ENCODE measurements at regions of chr16 and their contacts with region 1.

Region 1: DNA sequence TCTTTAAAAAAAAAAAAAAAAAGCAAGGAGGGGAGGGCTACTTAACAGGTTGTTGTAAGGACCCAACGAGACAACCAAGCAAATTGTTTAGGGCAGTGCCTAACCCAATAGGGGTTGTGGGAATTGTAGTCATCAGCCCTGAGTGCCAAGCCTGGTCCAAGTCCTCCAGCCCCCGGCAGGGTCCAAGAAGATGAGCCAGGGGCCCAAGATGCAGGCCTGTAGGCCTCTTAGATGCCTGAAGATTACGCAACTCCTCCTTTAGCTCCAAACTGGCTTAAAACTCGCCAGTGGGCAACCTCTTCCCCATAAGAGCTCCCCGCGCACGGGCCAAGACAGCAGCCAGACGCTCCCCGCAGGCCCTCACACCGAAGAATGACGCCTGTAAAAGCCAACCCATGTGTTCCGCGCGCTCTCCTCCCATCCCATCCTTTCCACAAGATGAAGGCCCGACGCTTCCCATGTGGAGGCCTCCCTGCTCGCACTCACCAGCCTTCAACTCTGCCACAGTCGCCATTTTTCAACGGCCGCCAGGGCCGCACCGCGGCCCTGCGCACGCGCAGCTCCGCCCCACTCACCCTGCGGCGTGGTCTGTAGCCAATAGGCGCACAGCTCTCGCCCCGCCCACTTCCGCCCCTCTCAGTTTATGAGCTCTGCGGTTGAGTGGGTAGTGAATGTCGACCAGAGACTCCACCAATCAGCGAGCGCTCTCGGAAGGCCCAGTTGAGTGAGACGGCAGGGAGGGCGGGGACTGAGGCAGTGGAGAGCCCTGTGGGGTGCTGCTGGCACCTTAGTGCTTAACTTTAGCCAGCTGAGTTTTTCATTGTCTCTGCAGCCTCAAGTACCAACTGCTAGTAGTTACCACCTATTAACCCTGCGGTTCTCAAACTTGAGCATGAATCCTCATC is at the start of gene CEP20:
- DNase-seq: peak; percentile 99 to 100 (median 99)
- H3K4me3 ChIP-seq: peak within 1 kb of the TSS; percentile 58 to 95 (median 68)
- H3K4me3 Mint-ChIP-seq: peak within 1 kb of the TSS; percentile 100
- H3K27ac ChIP-seq: peak within 1 kb of the TSS; percentile 76 to 91
- H3K27ac Mint-ChIP-seq: peak within 1 kb of the TSS; percentile 98 to 100 (median 98)
- H3K4me1 ChIP-seq: peaks cover 14 to 21% of the 10 kb centered on the region in 2 donors
- H3K4me1 Mint-ChIP-seq: peaks cover 30% of the 10 kb centered on the region
- H3K27me3 ChIP-seq: no peaks in the 10 kb centered on the region
- H3K27me3 Mint-ChIP-seq: peaks cover 0 to 2% (median 0%) of the 10 kb centered on the region in 3 donors
- CTCF ChIP-seq: no peak
- polyA plus RNA-seq, gene CEP20: 11.6 to 27.3 (median 24.7) TPM

Region 2: DNA sequence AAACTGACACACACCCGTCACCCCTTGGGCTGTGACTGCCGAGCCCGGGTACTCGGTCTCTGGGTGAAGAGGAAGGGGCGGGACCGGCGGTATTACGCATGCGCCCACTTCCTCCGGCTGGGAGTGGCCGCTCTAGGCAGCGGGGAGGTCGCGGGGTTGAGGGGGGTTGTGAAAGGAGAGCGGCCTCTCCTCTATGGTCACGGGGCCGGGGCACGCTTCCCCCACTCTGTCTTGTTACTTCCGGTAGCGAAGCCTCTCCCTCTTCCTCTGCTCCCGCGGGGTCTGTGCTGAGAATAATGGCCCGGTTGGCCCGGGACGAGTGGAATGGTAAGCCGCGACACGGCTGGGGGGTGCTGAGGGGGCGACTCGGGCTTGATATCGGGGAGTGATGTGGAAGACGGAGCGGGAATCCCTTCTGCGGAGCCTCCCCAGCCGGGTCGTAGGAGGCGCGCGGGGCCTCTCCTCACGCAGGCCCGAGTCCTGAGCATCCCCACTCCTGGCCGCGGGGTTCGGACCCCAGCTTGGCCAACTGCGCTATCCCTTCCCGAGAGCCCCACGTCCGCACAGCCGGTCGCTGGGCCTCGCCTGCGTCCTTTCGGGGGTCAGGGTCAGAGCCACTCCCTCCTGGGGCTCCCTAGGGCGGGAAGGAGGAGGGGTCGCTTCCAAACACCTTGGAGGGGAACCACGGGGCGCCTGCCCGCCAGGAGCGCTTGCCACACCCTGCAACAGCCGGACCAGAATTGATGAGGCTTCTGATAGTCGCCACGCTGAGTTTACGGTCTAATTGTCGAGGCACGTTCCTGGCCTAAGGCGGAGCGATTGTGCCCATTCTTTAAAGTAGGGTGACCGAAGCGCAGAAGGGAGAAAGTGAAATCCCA is 1255.4 kb before region 1 on chr16 and contains the start of gene BFAR:
- intact Hi-C with region 1: loop called in 1 of 2 experiments (anchors 10 kb)
- DNase-seq: peak; percentile 98 to 99 (median 99)
- H3K4me3 ChIP-seq: peak within 1 kb of the TSS; percentile 65 to 95 (median 93)
- H3K4me3 Mint-ChIP-seq: peak within 1 kb of the TSS; percentile 99
- H3K27ac ChIP-seq: peak within 1 kb of the TSS; percentile 91 to 94
- H3K27ac Mint-ChIP-seq: peak within 1 kb of the TSS; percentile 97 to 100 (median 97)
- H3K4me1 ChIP-seq: peaks cover 39 to 48% of the 10 kb centered on the region in 2 donors
- H3K4me1 Mint-ChIP-seq: peaks cover 43% of the 10 kb centered on the region
- H3K27me3 ChIP-seq: no peaks in the 10 kb centered on the region
- H3K27me3 Mint-ChIP-seq: no peaks in the 10 kb centered on the region
- CTCF ChIP-seq: no peak
- polyA plus RNA-seq, gene BFAR: 27.5 to 36.0 (median 28.6) TPM

Region 3: GRCh38 chr16:15765880-15766279 is 122.4 kb before region 1 on chr16:
- intact Hi-C with region 1: no loop called
- DNase-seq: peak in 2 of 3 donors; percentile 10 to 13
- H3K4me3 ChIP-seq: no peak overlapping the region
- H3K4me3 Mint-ChIP-seq: no peak overlapping the region
- H3K27ac ChIP-seq: no peak overlapping the region
- H3K27ac Mint-ChIP-seq: no peak overlapping the region
- H3K4me1 ChIP-seq: no peaks in the 10 kb centered on the region
- H3K4me1 Mint-ChIP-seq: no peaks in the 10 kb centered on the region
- H3K27me3 ChIP-seq: no peaks in the 10 kb centered on the region
- H3K27me3 Mint-ChIP-seq: peaks cover 0 to 1% (median 1%) of the 10 kb centered on the region in 3 donors
- CTCF ChIP-seq: peak; percentile 44

Region 4: GRCh38 chr16:15949210-15950160 is 61.2 kb after region 1 on chr16 and contains the start of gene ABCC1:
- intact Hi-C with region 1: loop called in 1 of 2 experiments (anchors 5 kb)
- DNase-seq: peak in 2 of 3 donors; percentile 50 to 58
- H3K4me3 ChIP-seq: peak within 1 kb of the TSS; percentile 82 to 95 (median 90)
- H3K4me3 Mint-ChIP-seq: peak within 1 kb of the TSS; percentile 96 to 98
- H3K27ac ChIP-seq: peak within 1 kb of the TSS; percentile 30 to 88
- H3K27ac Mint-ChIP-seq: peak within 1 kb of the TSS; percentile 82 to 95 (median 90)
- H3K4me1 ChIP-seq: peaks cover 47 to 49% of the 10 kb centered on the region in 2 donors
- H3K4me1 Mint-ChIP-seq: peaks cover 45% of the 10 kb centered on the region
- H3K27me3 ChIP-seq: no peaks in the 10 kb centered on the region
- H3K27me3 Mint-ChIP-seq: peaks cover 0 to 6% (median 2%) of the 10 kb centered on the region in 3 donors
- CTCF ChIP-seq: no peak
- polyA plus RNA-seq, gene ABCC1: 1.4 to 23.6 (median 3.0) TPM

Region 5: GRCh38 chr16:16120382-16121184 is 232.3 kb after region 1 on chr16:
- intact Hi-C with region 1: no loop called
- DNase-seq: no peak
- H3K4me3 ChIP-seq: no peak overlapping the region
- H3K4me3 Mint-ChIP-seq: no peak overlapping the region
- H3K27ac ChIP-seq: no peak overlapping the region
- H3K27ac Mint-ChIP-seq: peak overlapping the region in 1 of 7 donors; percentile 38
- H3K4me1 ChIP-seq: no peaks in the 10 kb centered on the region
- H3K4me1 Mint-ChIP-seq: peaks cover 12% of the 10 kb centered on the region
- H3K27me3 ChIP-seq: no peaks in the 10 kb centered on the region
- H3K27me3 Mint-ChIP-seq: peaks cover 0 to 3% (median 3%) of the 10 kb centered on the region in 3 donors
- CTCF ChIP-seq: no peak

Measured in CD14-positive monocyte (primary cell).